Activated CD4-positive, alpha-beta memory T cell treated with anti-CD3 and anti-CD28 coated beads, Interleukin-2, amount 10 ng/mL, durations not matched to agents 7 days and 5 days (primary cell): ENCODE measurements at regions of chr10 and their contacts with region 1.

Region 1: DNA sequence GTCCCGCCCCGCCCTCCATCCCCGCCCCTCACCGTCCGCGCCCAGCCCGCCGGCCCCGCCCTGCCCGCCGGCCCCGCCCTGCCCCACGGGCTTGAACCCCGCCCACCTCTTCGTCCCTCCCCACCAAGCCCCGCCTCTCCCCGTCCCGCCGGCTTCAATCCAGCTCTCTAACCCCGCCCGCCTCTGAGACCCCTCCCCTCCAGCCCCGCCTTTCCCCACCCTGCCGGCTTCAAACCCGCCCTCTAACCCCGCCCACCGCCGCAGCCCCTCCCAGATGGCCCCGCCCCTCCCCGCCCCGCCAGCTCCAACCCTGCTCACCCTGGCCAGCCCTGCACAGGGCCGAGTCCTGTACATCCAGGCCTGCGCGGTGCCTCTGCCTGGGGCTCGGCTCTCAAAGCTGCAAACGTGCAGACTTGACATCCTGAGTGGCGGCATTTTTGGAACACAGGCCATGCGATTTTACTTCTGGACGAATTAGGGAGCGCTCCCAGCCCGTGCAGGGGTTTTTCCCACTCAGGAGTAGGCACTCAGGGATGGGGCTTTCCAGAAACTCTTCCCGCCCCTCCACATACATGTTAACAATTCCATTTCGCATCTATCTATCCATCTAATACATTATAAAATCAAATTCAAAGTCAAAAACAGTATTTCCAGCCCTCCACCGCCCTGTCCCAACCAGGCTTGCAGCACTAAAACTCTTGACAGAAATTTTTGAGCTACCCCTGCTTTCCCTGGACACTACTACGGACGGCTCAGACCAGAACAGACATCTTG is 475 bp upstream of the NMT2 start:
- DNase-seq: peak; percentile 97
- H3K4me3 Mint-ChIP-seq: peak overlapping the region; percentile 75
- H3K27ac Mint-ChIP-seq: peak overlapping the region; percentile 94
- H3K4me1 Mint-ChIP-seq: peaks cover 53% of the 10 kb centered on the region
- H3K27me3 Mint-ChIP-seq: no peaks in the 10 kb centered on the region

Region 2: GRCh38 chr10:14954001-14954770 is 214.8 kb before region 1 on chr10 and contains the start of gene DCLRE1C:
- CTCF ChIA-PET with region 1: interaction called, 3 read pairs
- POLR2A ChIA-PET with region 1: interaction called, 14 read pairs
- DNase-seq: peak; percentile 93
- H3K4me3 Mint-ChIP-seq: peak within 1 kb of the TSS; percentile 87
- H3K27ac Mint-ChIP-seq: peak within 1 kb of the TSS; percentile 93
- H3K4me1 Mint-ChIP-seq: peaks cover 64% of the 10 kb centered on the region
- H3K27me3 Mint-ChIP-seq: no peaks in the 10 kb centered on the region
- total RNA-seq, gene DCLRE1C: 36.8 to 40.4 TPM

Region 3: DNA sequence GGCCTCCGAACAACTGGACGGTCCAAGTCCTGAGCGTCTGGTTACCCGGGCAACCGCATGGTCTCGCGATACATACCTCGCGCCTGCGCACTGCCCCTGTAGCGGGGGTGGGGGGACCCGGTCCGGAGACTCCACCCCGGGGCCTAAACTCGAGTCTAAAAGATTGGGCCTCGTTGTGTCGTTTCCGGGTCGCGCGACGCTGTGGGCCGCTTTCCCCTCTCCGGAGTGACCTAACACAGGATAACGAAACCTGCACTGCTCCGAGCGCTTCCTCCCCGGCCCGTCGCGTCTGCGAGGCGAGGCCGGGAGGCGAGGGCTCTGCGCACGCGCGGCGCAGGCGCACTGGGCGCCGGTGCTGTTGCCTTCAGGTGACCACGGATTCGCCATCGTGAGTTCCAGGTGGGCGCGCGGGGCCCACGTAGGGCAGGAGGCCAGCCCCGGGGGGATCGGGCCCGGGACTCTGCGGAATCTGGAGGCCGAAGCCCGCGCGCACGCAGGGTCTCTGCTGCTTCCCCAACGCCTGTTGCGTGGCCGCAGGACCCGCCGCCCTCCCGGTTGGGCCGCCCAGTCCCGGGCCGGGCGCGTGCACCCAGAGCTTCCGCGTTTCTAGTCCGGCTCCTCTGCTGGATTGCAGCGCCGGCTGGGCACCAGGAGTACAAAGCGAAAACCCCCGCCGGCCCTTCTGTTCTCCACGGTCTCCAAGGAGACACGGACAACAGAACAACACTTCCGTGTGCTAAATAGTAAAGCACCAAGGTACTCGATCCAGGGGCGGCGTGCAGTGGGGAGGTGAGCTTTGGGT is 71.8 kb before region 1 on chr10 and contains the start of gene RPP38:
- CTCF ChIA-PET with region 1: interaction called, 4 read pairs
- POLR2A ChIA-PET with region 1: interaction called, 13 read pairs
- DNase-seq: peak; percentile 94
- H3K4me3 Mint-ChIP-seq: peak within 1 kb of the TSS; percentile 87
- H3K27ac Mint-ChIP-seq: peak within 1 kb of the TSS; percentile 87
- H3K4me1 Mint-ChIP-seq: peaks cover 24% of the 10 kb centered on the region
- H3K27me3 Mint-ChIP-seq: peaks cover 6% of the 10 kb centered on the region
- total RNA-seq, gene RPP38: 14.9 to 16.8 TPM

Region 4: GRCh38 chr10:15122477-15123030 is 46.4 kb before region 1 on chr10:
- CTCF ChIA-PET with region 1: interaction called, 8 read pairs
- POLR2A ChIA-PET with region 1: interaction called, 39 read pairs
- DNase-seq: no peak
- H3K4me3 Mint-ChIP-seq: peak overlapping the region; percentile 35
- H3K27ac Mint-ChIP-seq: peak overlapping the region; percentile 82
- H3K4me1 Mint-ChIP-seq: peaks cover 56% of the 10 kb centered on the region
- H3K27me3 Mint-ChIP-seq: no peaks in the 10 kb centered on the region

Region 5: GRCh38 chr10:15182540-15183207 is 13.7 kb after region 1 on chr10:
- CTCF ChIA-PET with region 1: interaction called, 12 read pairs
- POLR2A ChIA-PET with region 1: interaction called, 12 read pairs
- DNase-seq: no peak
- H3K4me3 Mint-ChIP-seq: no peak overlapping the region
- H3K27ac Mint-ChIP-seq: no peak overlapping the region
- H3K4me1 Mint-ChIP-seq: peaks cover 23% of the 10 kb centered on the region
- H3K27me3 Mint-ChIP-seq: peaks cover 4% of the 10 kb centered on the region

Region 6: DNA sequence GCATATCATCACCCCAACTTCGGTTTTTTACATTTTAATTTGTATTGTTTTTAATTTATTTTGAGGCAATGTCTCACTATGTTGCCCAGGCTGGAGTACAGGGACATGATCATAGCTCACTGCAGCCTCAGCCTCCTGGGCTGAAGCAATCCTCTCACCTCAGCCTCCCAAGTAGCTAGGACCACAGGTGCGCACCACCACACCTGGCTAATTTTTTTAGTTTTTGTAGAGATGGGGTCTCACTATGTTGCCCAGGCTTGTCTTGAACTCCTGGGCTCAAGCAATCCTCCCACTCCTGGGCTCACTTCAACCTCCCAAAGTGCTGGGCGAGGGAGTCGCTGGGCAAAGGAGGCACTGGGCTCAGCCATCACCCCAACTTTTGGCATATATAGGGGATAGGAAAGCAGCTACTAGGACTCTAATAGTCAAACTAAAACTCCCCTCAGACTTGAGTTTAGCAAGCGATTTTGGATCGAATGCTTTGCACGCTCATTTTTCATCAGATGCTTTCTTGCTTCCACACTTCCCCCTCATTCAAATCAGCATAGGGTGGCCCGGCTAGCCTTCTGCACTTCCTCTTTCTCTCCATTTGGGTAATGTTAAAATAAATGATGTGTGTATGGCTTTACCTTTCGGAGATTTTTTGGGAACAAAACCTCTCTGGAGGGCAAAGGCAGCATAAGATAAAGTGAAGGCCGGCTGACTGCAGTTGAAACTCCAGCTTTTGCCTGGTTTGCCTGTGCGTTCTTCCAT is 20.3 kb after region 1 on chr10:
- CTCF ChIA-PET with region 1: interaction called, 12 read pairs
- POLR2A ChIA-PET with region 1: interaction called, 14 read pairs
- DNase-seq: no peak
- H3K4me3 Mint-ChIP-seq: no peak overlapping the region
- H3K27ac Mint-ChIP-seq: peak overlapping the region; percentile 75
- H3K4me1 Mint-ChIP-seq: peaks cover 38% of the 10 kb centered on the region
- H3K27me3 Mint-ChIP-seq: no peaks in the 10 kb centered on the region

Region 7: DNA sequence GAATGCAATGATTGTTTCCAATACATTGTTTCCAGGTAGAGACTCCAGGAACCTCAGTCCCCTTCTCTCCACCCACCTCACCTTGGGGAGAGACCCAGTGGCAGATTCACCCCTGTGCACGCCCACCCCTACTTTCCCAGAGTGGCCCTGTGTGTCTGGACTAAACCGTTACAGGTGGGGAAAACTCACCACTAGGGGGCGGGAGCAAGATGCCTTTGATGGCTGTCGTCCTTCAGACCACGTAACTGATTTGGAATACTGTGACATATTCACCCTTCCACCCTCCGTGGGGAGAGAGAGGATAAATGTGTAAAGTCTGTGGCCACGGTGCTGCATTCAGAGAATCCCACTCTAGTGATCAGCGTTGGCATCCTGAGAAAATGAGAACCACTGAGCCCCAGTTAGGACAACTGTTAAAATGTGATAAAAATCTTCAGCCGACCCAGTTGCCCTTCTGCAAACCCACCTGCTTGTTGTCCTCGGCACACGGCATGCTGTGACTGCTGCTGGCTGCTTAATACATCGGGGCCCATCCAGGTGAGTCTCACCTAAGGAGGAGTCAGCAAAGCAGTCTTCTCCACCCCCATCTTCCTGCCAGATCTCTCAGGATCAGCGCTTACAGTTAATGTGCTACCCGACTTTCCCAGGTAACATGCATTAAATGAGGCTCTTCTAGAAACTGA is 41.0 kb after region 1 on chr10:
- CTCF ChIA-PET with region 1: interaction called, 29 read pairs
- POLR2A ChIA-PET with region 1: interaction called, 17 read pairs
- DNase-seq: peak; percentile 82
- H3K4me3 Mint-ChIP-seq: no peak overlapping the region
- H3K27ac Mint-ChIP-seq: no peak overlapping the region
- H3K4me1 Mint-ChIP-seq: peaks cover 51% of the 10 kb centered on the region
- H3K27me3 Mint-ChIP-seq: no peaks in the 10 kb centered on the region

Region 8: GRCh38 chr10:15223174-15223573 is 54.2 kb after region 1 on chr10:
- CTCF ChIA-PET with region 1: no interaction called
- POLR2A ChIA-PET with region 1: no interaction called
- DNase-seq: no peak
- H3K4me3 Mint-ChIP-seq: no peak overlapping the region
- H3K27ac Mint-ChIP-seq: no peak overlapping the region
- H3K4me1 Mint-ChIP-seq: no peaks in the 10 kb centered on the region
- H3K27me3 Mint-ChIP-seq: no peaks in the 10 kb centered on the region